ENCODE measurements at regions of chr1 and their contacts with region 1.

Region 1: GRCh38 chr1:153990468-153991150 is at the start of gene RPS27:
- DNase-seq: peak; percentile 96
- H3K4me3 Mint-ChIP-seq: peak within 1 kb of the TSS; percentile 93
- H3K27ac Mint-ChIP-seq: peak within 1 kb of the TSS; percentile 96
- H3K4me1 Mint-ChIP-seq: peaks cover 38% of the 10 kb centered on the region
- H3K27me3 Mint-ChIP-seq: no peaks in the 10 kb centered on the region
- total RNA-seq, gene RPS27: 1,207 and 1,242 TPM in 2 replicates

Region 2: GRCh38 chr1:153677718-153678505 is 312.7 kb before region 1 on chr1:
- intact Hi-C with region 1: loop called (anchors 1 kb)
- DNase-seq: peak; percentile 85
- H3K4me3 Mint-ChIP-seq: peak overlapping the region; percentile 85
- H3K27ac Mint-ChIP-seq: no peak overlapping the region
- H3K4me1 Mint-ChIP-seq: peaks cover 24% of the 10 kb centered on the region
- H3K27me3 Mint-ChIP-seq: peaks cover 48% of the 10 kb centered on the region

Region 3: GRCh38 chr1:153805042-153805745 is 185.4 kb before region 1 on chr1:
- intact Hi-C with region 1: loop called (anchors 2 kb)
- DNase-seq: peak; percentile 87
- H3K4me3 Mint-ChIP-seq: peak overlapping the region; percentile 11
- H3K27ac Mint-ChIP-seq: peak overlapping the region; percentile 75
- H3K4me1 Mint-ChIP-seq: peaks cover 25% of the 10 kb centered on the region
- H3K27me3 Mint-ChIP-seq: no peaks in the 10 kb centered on the region

Region 4: GRCh38 chr1:153946622-153947241 is 43.9 kb before region 1 on chr1 and contains the start of gene DENND4B:
- intact Hi-C with region 1: loop called (anchors 2 kb)
- DNase-seq: peak; percentile 93
- H3K4me3 Mint-ChIP-seq: peak within 1 kb of the TSS; percentile 96
- H3K27ac Mint-ChIP-seq: peak within 1 kb of the TSS; percentile 96
- H3K4me1 Mint-ChIP-seq: peaks cover 35% of the 10 kb centered on the region
- H3K27me3 Mint-ChIP-seq: no peaks in the 10 kb centered on the region
- total RNA-seq, gene DENND4B: 128 and 130 TPM in 2 replicates

Region 5: GRCh38 chr1:154157520-154158306 is 167.1 kb after region 1 on chr1:
- intact Hi-C with region 1: loop called (anchors 5 kb)
- DNase-seq: peak; percentile 93
- H3K4me3 Mint-ChIP-seq: peak overlapping the region; percentile 74
- H3K27ac Mint-ChIP-seq: peak overlapping the region; percentile 82
- H3K4me1 Mint-ChIP-seq: peaks cover 55% of the 10 kb centered on the region
- H3K27me3 Mint-ChIP-seq: no peaks in the 10 kb centered on the region

Region 6: GRCh38 chr1:154272217-154272998 is 281.8 kb after region 1 on chr1 and contains the start of gene HAX1:
- intact Hi-C with region 1: loop called (anchors 2 kb)
- DNase-seq: peak; percentile 98
- H3K4me3 Mint-ChIP-seq: peak within 1 kb of the TSS; percentile 97
- H3K27ac Mint-ChIP-seq: peak within 1 kb of the TSS; percentile 98
- H3K4me1 Mint-ChIP-seq: peaks cover 39% of the 10 kb centered on the region
- H3K27me3 Mint-ChIP-seq: no peaks in the 10 kb centered on the region
- total RNA-seq, gene HAX1: 114 and 118 TPM in 2 replicates

Measured in activated CD4-positive, alpha-beta T cell treated with anti-CD3 and anti-CD28 coated beads, Interleukin-2, amount 10 ng/mL, durations not matched to agents 24 days and 14 days (primary cell).